Endothelial cell of umbilical vein (primary cell): ENCODE measurements at regions of chr19 and their contacts with region 1.

Region 1: GRCh38 chr19:18967358-18968146 is 26.5 kb upstream of the HOMER3 start:
- DNase-seq: peak; percentile 71
- H3K4me3 ChIP-seq: peak overlapping the region in 1 of 3 experiments; percentile 11
- H3K27ac ChIP-seq: peak overlapping the region; percentile 48
- H3K4me1 ChIP-seq: peaks cover 30% of the 10 kb centered on the region
- H3K27me3 ChIP-seq: no peaks in the 10 kb centered on the region
- CTCF ChIP-seq: no peak
- POLR2A ChIP-seq: no peak

Region 2: GRCh38 chr19:18846862-18847548 is 120.5 kb before region 1 on chr19:
- CTCF ChIA-PET with region 1: no interaction called
- POLR2A ChIA-PET with region 1: no interaction called
- dilution Hi-C with region 1: no loop called
- intact Hi-C with region 1: no loop called
- DNase-seq: peak; percentile 70
- H3K4me3 ChIP-seq: no peak overlapping the region
- H3K27ac ChIP-seq: no peak overlapping the region
- H3K4me1 ChIP-seq: peaks cover 48% of the 10 kb centered on the region
- H3K27me3 ChIP-seq: no peaks in the 10 kb centered on the region
- CTCF ChIP-seq: peak; percentile 91 to 92
- POLR2A ChIP-seq: no peak

Region 3: DNA sequence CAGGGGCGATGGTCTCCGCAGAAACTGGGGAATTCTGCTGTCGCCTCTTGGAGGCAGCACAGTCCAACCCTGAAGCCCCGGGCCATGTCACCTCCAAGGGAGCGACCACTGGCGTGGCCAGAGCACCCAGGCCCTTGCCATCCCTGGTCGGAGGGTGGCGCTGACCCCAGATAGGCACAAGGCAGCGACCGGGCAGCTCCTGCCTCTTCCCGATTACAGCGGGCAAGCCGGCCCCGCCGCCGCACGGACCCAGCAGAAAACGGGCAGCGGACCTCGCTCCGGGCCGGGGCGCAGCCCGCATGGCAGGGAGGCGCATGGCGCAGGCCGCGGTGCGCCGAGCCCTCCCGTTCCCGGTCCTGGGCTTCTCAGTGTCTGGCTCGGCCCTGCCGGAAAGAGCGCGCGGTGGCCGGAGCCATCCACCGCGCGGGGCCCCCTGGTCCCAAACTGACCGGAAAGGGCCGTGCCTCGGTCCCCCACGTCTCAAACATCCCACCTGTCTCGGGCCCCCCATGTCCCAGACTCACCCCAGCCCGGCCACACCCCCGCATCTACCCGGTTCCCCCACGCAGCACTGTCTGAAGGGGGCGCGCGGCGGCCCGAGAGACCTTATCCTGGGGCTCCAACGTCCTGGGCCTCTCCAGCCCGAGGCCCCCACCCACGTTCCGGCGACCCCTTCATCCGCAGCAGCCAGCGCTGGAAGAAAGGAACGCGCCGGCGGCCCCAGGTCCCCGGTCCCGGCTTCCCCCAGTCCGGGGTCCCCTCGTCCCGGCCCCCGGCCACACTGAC is 72.3 kb before region 1 on chr19:
- CTCF ChIA-PET with region 1: no interaction called
- POLR2A ChIA-PET with region 1: no interaction called
- dilution Hi-C with region 1: no loop called
- intact Hi-C with region 1: loop called (anchors 5 kb)
- DNase-seq: peak; percentile 42
- H3K4me3 ChIP-seq: peak overlapping the region; percentile 35 to 54 (median 41)
- H3K27ac ChIP-seq: no peak overlapping the region
- H3K4me1 ChIP-seq: no peaks in the 10 kb centered on the region
- H3K27me3 ChIP-seq: peaks cover 0 to 2% of the 10 kb centered on the region in 2 experiments
- CTCF ChIP-seq: peak; percentile 33 to 54
- POLR2A ChIP-seq: no peak

Region 4: DNA sequence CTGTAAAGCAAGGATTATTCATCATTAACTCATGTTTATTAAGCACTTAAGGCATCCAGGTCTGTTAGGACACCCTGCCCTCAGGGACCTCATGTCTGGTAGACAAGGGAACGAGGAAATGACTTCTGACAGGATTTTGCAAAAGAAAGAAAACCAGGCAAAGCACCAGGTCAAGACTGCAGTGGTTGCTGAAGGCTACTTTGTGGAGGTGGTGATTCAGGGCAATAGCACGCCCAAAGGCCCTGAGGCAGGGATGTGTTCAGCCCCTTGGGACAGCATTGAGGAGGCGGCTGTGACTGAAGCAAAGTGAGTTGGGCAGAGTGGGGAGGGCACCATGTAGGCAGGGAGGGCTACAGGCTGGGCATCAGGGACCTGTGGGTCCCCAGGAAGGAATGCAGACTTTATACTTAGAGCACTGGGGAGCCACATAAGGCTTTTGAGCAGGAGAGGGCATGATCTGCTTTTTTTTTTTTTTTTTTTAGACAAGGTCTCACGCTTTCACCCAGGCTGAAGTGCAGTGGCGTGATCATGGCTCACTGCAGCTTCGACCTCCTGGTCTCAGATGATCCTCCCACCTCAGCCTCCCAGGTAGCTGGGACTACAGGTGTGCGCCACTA is 15.8 kb before region 1 on chr19:
- CTCF ChIA-PET with region 1: interaction called, 13 read pairs
- POLR2A ChIA-PET with region 1: interaction called, 3 read pairs
- dilution Hi-C with region 1: no loop called
- intact Hi-C with region 1: loop called (anchors 2 kb)
- DNase-seq: peak; percentile 17
- H3K4me3 ChIP-seq: no peak overlapping the region
- H3K27ac ChIP-seq: no peak overlapping the region
- H3K4me1 ChIP-seq: no peaks in the 10 kb centered on the region
- H3K27me3 ChIP-seq: no peaks in the 10 kb centered on the region
- CTCF ChIP-seq: no peak
- POLR2A ChIP-seq: no peak